ENCODE measurements at regions of chr19 and their contacts with region 1.

Region 1: DNA sequence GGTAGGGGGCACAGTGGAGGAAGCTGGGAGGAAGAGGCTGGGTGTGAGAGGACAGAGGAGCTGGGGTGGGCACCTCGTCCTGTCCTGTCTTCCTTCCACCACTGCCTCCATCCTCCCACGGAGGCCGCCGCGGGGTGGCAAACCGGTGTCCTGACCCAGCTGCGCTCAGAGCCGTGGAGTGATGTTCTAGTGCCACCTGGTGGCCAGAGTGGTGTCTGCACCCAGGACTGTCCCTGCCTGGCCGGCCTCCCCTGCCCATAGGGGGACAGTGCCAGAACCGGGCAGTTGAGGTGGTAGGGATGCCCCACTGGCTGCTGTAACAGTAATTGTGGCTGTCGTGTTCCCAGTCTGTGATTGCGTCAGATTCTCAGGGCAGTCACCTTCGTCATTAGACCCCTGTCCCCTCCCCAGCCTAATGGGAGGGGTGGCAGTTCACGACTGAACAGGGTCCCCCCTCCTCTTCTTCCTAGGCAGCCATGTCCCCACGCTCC is 11.1 kb upstream of the ARRDC2 start:
- DNase-seq: peak; percentile 86
- H3K4me3 ChIP-seq: no peak overlapping the region
- H3K27ac ChIP-seq: no peak overlapping the region
- H3K4me1 ChIP-seq: peaks cover 7% of the 10 kb centered on the region
- H3K27me3 ChIP-seq: peaks cover 57% of the 10 kb centered on the region
- CTCF ChIP-seq: peak; percentile 98

Region 2: DNA sequence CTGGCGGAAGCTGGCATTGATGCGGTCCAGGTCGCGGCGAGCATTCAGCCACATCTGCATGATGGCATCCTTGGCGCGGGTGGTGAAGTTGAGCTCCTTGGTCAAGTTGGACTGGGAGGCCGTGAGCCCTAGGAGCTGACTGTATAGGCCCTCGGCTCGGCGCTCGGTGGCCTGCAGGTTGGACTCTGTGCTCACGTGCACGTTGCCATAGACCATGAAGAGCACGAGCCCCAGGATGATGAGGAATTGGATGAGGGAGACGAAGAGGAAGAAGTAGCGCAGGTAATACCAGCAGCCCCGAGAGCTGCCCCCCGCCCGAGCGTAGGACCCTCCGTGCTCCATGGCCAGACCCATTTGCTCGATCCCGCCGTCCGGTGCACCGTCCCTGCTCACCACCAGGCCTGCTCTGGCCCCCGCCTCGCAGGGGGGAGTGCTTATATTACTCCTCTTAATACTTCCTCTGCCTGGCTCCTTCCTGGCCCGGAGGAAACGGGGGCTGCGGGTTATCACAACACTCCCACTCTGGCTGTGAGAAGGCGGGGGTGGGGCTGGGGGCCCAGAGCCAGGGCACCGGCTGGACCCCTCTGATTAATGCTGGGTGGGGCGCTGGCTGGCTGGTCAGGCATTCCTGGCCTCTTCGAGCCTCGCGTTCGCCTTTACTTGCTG is 619.8 kb before region 1 on chr19 and contains the start of gene PLVAP:
- intact Hi-C with region 1: no loop called
- DNase-seq: peak; percentile 36
- H3K4me3 ChIP-seq: peak within 1 kb of the TSS; percentile 45
- H3K27ac ChIP-seq: peak within 1 kb of the TSS; percentile 30
- H3K4me1 ChIP-seq: peaks cover 14% of the 10 kb centered on the region
- H3K27me3 ChIP-seq: peaks cover 25% of the 10 kb centered on the region
- CTCF ChIP-seq: peak; percentile 32
- total RNA-seq, gene PLVAP: 36.9 TPM

Region 3: GRCh38 chr19:17766543-17767131 is 230.2 kb before region 1 on chr19:
- intact Hi-C with region 1: no loop called
- DNase-seq: peak; percentile 76
- H3K4me3 ChIP-seq: peak overlapping the region; percentile 47
- H3K27ac ChIP-seq: no peak overlapping the region
- H3K4me1 ChIP-seq: peaks cover 10% of the 10 kb centered on the region
- H3K27me3 ChIP-seq: peaks cover 23% of the 10 kb centered on the region
- CTCF ChIP-seq: peak; percentile 86

Region 4: DNA sequence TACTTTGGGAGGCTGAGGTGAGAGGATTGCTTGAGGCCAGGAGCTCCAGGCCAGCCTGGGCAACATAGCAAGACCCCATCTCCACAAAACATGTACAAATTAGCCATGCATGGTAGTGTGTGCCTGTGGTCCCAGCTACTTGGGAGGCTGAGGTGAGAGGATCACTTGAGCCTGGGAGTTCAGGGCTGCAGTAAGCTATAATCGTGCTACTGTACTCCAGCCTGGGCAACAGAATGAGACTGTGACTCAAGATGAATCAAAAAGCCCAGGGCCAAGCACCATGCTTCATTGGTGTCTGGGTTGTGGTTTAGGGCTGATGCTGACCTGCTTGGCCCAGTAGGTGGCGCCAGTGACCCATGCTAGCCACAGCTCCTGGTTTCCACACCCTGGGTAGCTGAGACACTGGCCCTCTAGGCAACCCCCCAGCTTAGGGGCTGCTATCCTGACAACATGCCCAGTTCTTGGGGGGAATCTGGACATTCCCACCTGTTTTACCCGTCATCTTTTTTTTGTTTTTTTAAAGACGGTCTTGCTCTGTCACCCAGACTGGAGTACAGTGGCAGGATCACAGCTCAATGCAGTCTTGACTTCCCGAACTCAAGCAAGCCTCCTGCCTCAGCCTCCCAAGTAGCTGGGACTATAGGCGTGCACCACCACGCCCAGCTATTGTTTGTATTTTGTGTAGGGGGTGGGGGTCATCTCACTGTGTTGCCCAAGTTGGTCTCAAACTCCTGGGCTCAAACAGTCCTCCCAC is 58.6 kb before region 1 on chr19:
- intact Hi-C with region 1: loop called (anchors 5 kb)
- DNase-seq: peak; percentile 76
- H3K4me3 ChIP-seq: no peak overlapping the region
- H3K27ac ChIP-seq: no peak overlapping the region
- H3K4me1 ChIP-seq: peaks cover 10% of the 10 kb centered on the region
- H3K27me3 ChIP-seq: no peaks in the 10 kb centered on the region
- CTCF ChIP-seq: peak; percentile 96

Region 5: DNA sequence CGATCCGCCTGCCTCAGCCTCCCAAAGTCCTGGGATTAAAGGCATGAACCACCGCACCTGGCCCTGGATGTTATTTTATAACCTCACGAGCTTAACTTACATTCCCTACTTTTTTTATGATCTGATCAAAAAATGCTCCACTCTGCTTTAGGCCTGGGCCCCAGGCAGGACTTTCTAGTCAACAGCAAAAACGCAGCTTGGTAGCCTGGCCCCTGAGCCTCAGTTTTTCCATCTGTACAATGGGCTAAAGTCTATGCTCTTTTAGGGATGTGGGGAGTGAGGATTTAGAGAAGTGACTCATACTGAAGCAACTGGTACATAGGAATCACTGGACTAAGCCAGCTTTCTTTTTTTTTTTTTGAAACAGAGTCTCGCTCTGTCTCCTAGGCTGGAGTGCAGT is 144.2 kb after region 1 on chr19:
- intact Hi-C with region 1: no loop called
- DNase-seq: no peak
- H3K4me3 ChIP-seq: no peak overlapping the region
- H3K27ac ChIP-seq: no peak overlapping the region
- H3K4me1 ChIP-seq: no peaks in the 10 kb centered on the region
- H3K27me3 ChIP-seq: no peaks in the 10 kb centered on the region
- CTCF ChIP-seq: no peak

Measured in left ventricle myocardium inferior (tissue), 1 donor.